ENCODE measurements at regions of chr6 and their contacts with region 1.

Region 1: GRCh38 chr6:99901596-99902384 is 92.2 kb downstream of the MCHR2 start:
- DNase-seq: no peak
- H3K4me3 ChIP-seq: no peak overlapping the region
- H3K27ac ChIP-seq: no peak overlapping the region
- H3K4me1 ChIP-seq: no peaks in the 10 kb centered on the region
- H3K27me3 ChIP-seq: no peaks in the 10 kb centered on the region
- CTCF ChIP-seq: no peak
- POLR2A ChIP-seq: no peak

Region 2: DNA sequence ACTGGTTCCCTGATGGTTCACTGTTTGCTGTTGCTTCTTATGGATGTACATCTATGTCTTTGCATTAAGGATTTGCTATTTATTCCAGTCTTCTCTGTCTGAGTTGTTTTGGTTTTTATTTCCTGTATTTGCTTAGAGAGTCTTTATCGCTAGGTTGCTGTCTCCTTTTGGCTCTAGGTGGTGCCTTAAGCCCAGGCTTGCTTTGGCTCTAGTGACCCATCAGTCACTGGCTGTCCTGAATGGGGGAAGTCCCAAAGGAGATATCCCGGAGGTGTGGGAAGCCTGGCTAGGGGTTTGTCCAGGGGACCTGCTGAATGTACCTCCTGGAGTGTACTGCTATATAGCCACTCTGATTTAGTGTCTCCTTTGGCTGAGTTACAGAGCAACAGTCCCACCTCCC is 38.8 kb after region 1 on chr6:
- intact Hi-C with region 1: no loop called
- DNase-seq: no peak
- H3K4me3 ChIP-seq: no peak overlapping the region
- H3K27ac ChIP-seq: no peak overlapping the region
- H3K4me1 ChIP-seq: no peaks in the 10 kb centered on the region
- H3K27me3 ChIP-seq: no peaks in the 10 kb centered on the region
- CTCF ChIP-seq: no peak
- POLR2A ChIP-seq: no peak

Region 3: GRCh38 chr6:99960027-99960426 is 58.2 kb after region 1 on chr6:
- intact Hi-C with region 1: loop called (anchors 2 kb)
- DNase-seq: no peak
- H3K4me3 ChIP-seq: no peak overlapping the region
- H3K27ac ChIP-seq: no peak overlapping the region
- H3K4me1 ChIP-seq: no peaks in the 10 kb centered on the region
- H3K27me3 ChIP-seq: no peaks in the 10 kb centered on the region
- CTCF ChIP-seq: no peak
- POLR2A ChIP-seq: no peak

Region 4: DNA sequence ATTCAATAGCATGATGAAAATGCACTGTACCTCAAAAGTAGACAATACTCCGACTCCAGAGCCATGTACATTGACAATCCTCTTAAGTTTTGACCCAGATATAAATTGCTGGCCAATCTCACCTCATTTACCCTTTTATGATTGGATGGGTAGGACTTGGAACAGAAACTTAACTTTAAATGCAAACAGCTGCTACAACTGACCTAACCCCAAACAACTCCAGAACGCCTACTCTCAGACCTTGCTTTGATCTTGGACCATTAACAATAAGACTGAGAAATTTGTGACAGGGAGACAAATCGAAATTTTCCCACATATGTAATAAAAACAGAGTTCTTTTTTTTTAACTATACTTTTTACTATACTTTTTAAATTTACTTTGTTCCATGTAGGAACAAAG is 292.7 kb after region 1 on chr6:
- intact Hi-C with region 1: no loop called
- DNase-seq: no peak
- H3K4me3 ChIP-seq: no peak overlapping the region
- H3K27ac ChIP-seq: no peak overlapping the region
- H3K4me1 ChIP-seq: no peaks in the 10 kb centered on the region
- H3K27me3 ChIP-seq: no peaks in the 10 kb centered on the region
- CTCF ChIP-seq: no peak
- POLR2A ChIP-seq: no peak

Measured in breast epithelium (tissue), 4 donors.